ENCODE measurements at regions of chr2 and their contacts with region 1.

Region 1: GRCh38 chr2:234288974-234289455 is 207.9 kb downstream of the ARL4C start:
- DNase-seq: peak; percentile 87
- ATAC-seq: peak; percentile 2
- H3K4me3 Mint-ChIP-seq: peak overlapping the region; percentile 54
- H3K27ac Mint-ChIP-seq: peak overlapping the region; percentile 98
- H3K4me1 Mint-ChIP-seq: peaks cover 74% of the 10 kb centered on the region
- H3K27me3 Mint-ChIP-seq: no peaks in the 10 kb centered on the region

Region 2: DNA sequence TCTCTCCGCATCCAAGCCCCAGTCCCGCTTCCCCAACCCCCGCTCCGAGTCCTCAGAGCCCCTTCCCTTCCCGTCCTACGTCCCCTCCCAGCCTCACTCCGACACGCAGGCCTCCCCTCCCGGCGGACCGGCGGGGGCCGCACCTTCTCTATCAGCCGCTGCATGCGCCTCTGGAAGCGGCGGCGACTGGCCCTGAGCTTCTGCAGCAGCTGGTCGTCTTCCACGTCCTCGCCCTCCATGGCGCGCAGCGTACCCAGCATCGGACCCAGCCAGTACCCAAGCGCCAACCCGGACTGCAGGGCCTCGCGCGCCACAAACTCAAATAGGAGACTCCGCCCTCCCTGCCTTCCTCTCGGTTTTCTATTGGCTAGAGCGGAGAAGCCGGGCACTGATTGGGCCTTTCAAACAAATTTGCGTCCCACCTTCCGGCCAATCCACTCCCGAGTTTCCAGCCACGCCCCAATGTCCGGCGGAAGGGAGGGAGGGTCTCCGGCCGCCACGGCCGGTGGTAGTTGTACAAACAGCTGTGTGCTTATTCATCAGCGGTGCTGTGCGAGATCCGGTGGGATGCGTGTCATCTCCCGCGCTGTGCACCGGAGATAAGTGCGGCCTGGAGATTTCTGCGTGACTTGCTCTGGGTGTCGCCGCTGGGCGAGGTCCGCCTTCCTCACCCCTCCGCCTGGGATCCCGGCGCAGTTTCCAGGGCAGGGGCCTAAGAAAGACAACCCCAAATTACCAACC is 434.6 kb before region 1 on chr2 and contains the start of gene HJURP:
- CTCF ChIA-PET with region 1: no interaction called
- POLR2A ChIA-PET with region 1: no interaction called
- intact Hi-C with region 1: loop called in 1 of 2 experiments (anchors 10 kb)
- DNase-seq: peak; percentile 96
- ATAC-seq: peak; percentile 95
- H3K4me3 Mint-ChIP-seq: peak within 1 kb of the TSS; percentile 97
- H3K27ac Mint-ChIP-seq: peak within 1 kb of the TSS; percentile 98
- H3K4me1 Mint-ChIP-seq: peaks cover 26% of the 10 kb centered on the region
- H3K27me3 Mint-ChIP-seq: no peaks in the 10 kb centered on the region
- total RNA-seq, gene HJURP: 94.6 to 111 TPM

Region 3: DNA sequence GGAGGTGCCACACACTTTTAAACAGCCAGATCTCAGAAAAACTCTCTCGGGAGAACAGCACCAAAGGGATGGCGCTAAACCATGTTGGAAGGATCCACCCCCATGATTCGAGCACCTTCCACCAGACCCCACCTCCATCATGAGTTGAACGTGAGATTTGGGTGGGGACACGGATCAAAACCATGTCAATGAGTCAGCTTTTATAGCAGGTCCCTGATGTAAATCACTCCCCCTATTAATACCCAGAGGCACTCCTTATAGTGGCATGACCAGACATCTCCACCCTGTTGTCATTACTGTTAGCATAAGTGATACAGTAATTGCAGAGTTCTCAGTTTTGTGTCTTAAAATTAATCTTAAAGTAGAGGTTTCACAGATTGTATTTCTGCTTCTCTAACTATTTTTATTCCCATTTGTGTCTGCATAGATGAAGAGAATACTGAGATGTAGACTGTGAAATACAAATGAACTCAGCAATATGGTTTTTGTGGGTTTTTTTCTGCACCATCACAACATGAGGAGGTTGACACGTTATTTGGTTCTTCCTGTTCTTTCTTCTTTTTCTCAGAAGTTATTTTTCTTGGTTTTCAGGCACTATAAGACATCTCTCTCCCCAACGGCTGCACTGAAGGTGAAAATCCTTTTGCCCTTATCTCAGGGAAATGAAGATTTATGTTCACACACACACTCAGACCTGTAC is 10.3 kb before region 1 on chr2:
- CTCF ChIA-PET with region 1: interaction called, 10 read pairs
- POLR2A ChIA-PET with region 1: no interaction called
- intact Hi-C with region 1: loop called (anchors 1 to 2 kb)
- DNase-seq: no peak
- ATAC-seq: peak; percentile 74
- H3K4me3 Mint-ChIP-seq: peak overlapping the region; percentile 29
- H3K27ac Mint-ChIP-seq: peak overlapping the region; percentile 80
- H3K4me1 Mint-ChIP-seq: peaks cover 49% of the 10 kb centered on the region
- H3K27me3 Mint-ChIP-seq: no peaks in the 10 kb centered on the region

Region 4: GRCh38 chr2:234368861-234369261 is 79.8 kb after region 1 on chr2:
- CTCF ChIA-PET with region 1: interaction called, 13 read pairs
- POLR2A ChIA-PET with region 1: interaction called, 11 read pairs
- intact Hi-C with region 1: loop called (anchors 2 to 5 kb)
- DNase-seq: peak; percentile 71
- ATAC-seq: peak; percentile 83
- H3K4me3 Mint-ChIP-seq: no peak overlapping the region
- H3K27ac Mint-ChIP-seq: peak overlapping the region; percentile 84
- H3K4me1 Mint-ChIP-seq: peaks cover 73% of the 10 kb centered on the region
- H3K27me3 Mint-ChIP-seq: no peaks in the 10 kb centered on the region

Region 5: GRCh38 chr2:234451852-234452625 is 163.0 kb after region 1 on chr2:
- CTCF ChIA-PET with region 1: interaction called, 3 read pairs
- POLR2A ChIA-PET with region 1: interaction called, 9 read pairs
- intact Hi-C with region 1: loop called in 1 of 2 experiments (anchors 2 kb)
- DNase-seq: no peak
- ATAC-seq: peak; percentile 34
- H3K4me3 Mint-ChIP-seq: peak overlapping the region; percentile 79
- H3K27ac Mint-ChIP-seq: peak overlapping the region; percentile 93
- H3K4me1 Mint-ChIP-seq: peaks cover 85% of the 10 kb centered on the region
- H3K27me3 Mint-ChIP-seq: no peaks in the 10 kb centered on the region

Region 6: GRCh38 chr2:234488913-234489451 is 200.0 kb after region 1 on chr2:
- CTCF ChIA-PET with region 1: interaction called, 5 read pairs
- POLR2A ChIA-PET with region 1: no interaction called
- intact Hi-C with region 1: loop called (anchors 1 kb)
- DNase-seq: peak; percentile 81
- ATAC-seq: peak; percentile 71
- H3K4me3 Mint-ChIP-seq: peak overlapping the region; percentile 71
- H3K27ac Mint-ChIP-seq: peak overlapping the region; percentile 97
- H3K4me1 Mint-ChIP-seq: peaks cover 85% of the 10 kb centered on the region
- H3K27me3 Mint-ChIP-seq: no peaks in the 10 kb centered on the region

Region 7: DNA sequence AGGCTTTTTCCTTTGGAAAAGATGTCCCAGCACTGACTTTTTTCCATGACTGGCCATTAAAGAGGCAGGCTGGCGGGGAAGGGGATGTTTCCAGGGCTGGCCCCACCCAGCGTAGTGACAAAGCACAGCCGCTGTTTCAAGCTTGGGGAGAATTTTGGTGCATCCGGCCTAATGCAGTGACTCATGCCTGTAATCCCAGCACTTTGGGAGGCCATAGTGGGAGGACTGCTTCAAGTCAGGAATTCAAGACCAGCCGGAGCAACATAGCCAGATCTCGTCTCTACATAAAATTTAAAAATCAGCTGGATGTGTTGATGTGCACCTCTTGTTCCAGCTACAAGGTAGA is 584.8 kb after region 1 on chr2:
- CTCF ChIA-PET with region 1: no interaction called
- POLR2A ChIA-PET with region 1: no interaction called
- intact Hi-C with region 1: no loop called
- DNase-seq: no peak
- ATAC-seq: no peak
- H3K4me3 Mint-ChIP-seq: no peak overlapping the region
- H3K27ac Mint-ChIP-seq: no peak overlapping the region
- H3K4me1 Mint-ChIP-seq: no peaks in the 10 kb centered on the region
- H3K27me3 Mint-ChIP-seq: peaks cover 9% of the 10 kb centered on the region